Endothelial cell of umbilical vein (primary cell): ENCODE measurements at regions of chr11 and their contacts with region 1.

Region 1: DNA sequence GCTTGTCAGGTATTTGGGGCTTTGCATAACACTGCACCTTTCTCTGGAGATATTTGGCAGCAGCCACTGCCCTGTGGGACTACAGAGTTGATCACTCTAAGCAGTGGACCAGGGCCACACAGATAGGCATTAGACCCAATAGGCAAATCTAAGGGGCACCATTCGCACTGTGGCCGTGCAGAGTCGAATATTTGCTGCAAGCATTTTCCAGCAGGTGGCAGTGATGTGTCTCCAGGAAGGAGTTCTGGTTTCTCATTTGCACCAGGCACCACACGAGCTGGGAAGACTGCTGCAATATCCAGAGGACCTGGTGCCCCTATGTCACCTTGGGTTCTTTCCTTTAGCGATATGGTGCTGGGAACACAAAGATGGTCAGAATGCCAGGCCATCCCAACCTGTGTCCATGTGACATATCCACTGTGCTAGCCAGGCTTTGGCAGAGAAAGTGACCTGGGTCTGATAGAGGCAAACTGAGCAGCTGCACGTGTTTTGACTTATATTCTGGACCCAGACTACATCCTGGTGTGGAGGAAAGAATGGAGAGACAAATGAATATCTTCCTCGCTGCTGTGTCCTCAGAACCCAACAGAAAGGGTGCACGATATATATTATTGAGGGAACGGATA is 318.7 kb downstream of the BUD13 start:
- DNase-seq: peak; percentile 65
- H3K4me3 ChIP-seq: no peak overlapping the region
- H3K27ac ChIP-seq: no peak overlapping the region
- H3K4me1 ChIP-seq: no peaks in the 10 kb centered on the region
- H3K27me3 ChIP-seq: no peaks in the 10 kb centered on the region
- CTCF ChIP-seq: peak; percentile 53 to 80
- POLR2A ChIP-seq: no peak

Region 2: GRCh38 chr11:116122697-116123472 is 331.2 kb before region 1 on chr11:
- CTCF ChIA-PET with region 1: no interaction called
- POLR2A ChIA-PET with region 1: no interaction called
- dilution Hi-C with region 1: no loop called
- intact Hi-C with region 1: no loop called
- DNase-seq: no peak
- H3K4me3 ChIP-seq: no peak overlapping the region
- H3K27ac ChIP-seq: no peak overlapping the region
- H3K4me1 ChIP-seq: no peaks in the 10 kb centered on the region
- H3K27me3 ChIP-seq: no peaks in the 10 kb centered on the region
- CTCF ChIP-seq: no peak
- POLR2A ChIP-seq: no peak

Region 3: GRCh38 chr11:116427903-116428637 is 26.1 kb before region 1 on chr11:
- CTCF ChIA-PET with region 1: no interaction called
- POLR2A ChIA-PET with region 1: no interaction called
- dilution Hi-C with region 1: no loop called
- intact Hi-C with region 1: no loop called
- DNase-seq: peak; percentile 7
- H3K4me3 ChIP-seq: no peak overlapping the region
- H3K27ac ChIP-seq: no peak overlapping the region
- H3K4me1 ChIP-seq: no peaks in the 10 kb centered on the region
- H3K27me3 ChIP-seq: no peaks in the 10 kb centered on the region
- CTCF ChIP-seq: no peak
- POLR2A ChIP-seq: no peak

Region 4: DNA sequence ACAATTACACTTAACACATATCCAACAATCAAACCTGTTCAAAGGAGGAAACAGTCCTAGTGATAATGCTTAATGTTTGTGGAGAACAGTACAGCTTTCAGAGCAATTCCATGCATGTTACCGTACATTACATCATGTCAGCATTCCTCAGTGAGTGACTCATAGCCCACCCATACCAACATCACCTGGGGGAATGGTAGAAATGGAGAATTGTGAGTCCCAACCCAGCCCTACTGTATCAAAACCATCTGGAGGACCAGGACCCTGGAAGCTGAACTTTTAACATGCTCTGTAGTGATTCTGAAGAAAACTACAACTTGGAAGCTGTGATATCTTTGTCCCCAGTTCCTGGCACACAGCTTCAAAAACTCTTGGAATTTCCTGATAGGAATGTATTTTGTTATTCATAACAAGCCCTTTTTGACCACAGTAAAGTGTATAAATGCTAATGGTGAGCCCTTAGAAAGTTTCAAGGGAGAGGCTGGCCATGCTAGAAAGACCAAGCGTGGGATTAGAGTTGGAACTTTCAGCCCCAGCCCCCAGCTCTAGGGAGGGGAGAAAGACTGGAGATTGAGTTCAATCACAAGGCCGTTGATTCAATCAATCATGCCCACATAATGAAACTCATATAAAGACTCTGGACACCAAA is 17.6 kb after region 1 on chr11:
- CTCF ChIA-PET with region 1: interaction called, 18 read pairs
- POLR2A ChIA-PET with region 1: no interaction called
- dilution Hi-C with region 1: no loop called
- intact Hi-C with region 1: no loop called
- DNase-seq: peak; percentile 96
- H3K4me3 ChIP-seq: no peak overlapping the region
- H3K27ac ChIP-seq: peak overlapping the region; percentile 75
- H3K4me1 ChIP-seq: peaks cover 25% of the 10 kb centered on the region
- H3K27me3 ChIP-seq: peaks cover under 1 to 2% of the 10 kb centered on the region in 2 experiments
- CTCF ChIP-seq: no peak
- POLR2A ChIP-seq: no peak

Region 5: DNA sequence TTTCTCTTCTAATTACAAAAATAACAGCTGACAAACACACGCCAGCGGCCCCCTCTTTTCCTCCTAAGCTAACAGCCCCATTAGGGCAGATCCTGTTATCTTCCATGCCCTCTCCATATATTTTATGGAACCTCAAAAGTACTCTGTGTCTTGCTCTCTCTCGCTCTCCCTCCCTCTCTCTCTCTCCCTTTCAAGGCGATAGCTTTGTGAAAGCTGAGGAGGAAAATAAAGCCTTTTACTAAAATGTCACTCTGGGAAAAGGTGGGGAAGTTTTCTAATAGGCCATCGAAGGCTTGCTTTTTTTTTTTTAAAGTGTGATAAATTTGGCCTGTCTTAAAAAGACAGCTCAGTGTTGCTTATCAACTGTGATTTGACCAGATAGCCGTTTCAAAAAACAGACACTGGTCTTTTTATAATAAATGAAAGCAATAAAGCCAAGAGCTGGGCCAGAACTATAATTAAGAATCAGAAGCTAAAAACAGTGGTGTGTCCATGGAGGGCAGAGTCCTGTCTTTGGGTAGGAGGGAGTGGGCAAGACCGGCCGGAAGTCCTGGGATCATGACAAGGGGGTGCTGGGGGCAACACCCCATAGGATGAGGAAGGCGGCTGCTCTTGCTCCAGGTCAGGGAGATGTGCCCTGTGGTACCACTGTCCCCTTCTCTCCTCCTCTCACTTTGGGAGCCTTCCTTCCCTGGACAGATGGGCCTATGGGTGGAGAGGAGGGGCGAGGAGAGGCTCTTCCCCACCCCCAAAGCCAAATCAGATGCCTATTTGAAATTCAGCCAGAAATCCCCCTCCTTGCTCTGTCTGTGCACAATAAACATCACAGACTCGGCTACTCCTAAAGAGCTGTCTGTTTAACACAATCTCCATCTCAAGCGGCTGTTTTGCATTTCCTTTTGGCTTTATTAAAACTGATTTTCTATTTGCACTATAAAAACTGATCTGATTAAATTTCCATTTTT is 51.4 kb after region 1 on chr11:
- CTCF ChIA-PET with region 1: interaction called, 169 read pairs
- POLR2A ChIA-PET with region 1: no interaction called
- dilution Hi-C with region 1: no loop called
- intact Hi-C with region 1: no loop called
- DNase-seq: no peak
- H3K4me3 ChIP-seq: no peak overlapping the region
- H3K27ac ChIP-seq: no peak overlapping the region
- H3K4me1 ChIP-seq: no peaks in the 10 kb centered on the region
- H3K27me3 ChIP-seq: peaks cover 8 to 18% of the 10 kb centered on the region in 2 experiments
- CTCF ChIP-seq: no peak
- POLR2A ChIP-seq: no peak

Region 6: DNA sequence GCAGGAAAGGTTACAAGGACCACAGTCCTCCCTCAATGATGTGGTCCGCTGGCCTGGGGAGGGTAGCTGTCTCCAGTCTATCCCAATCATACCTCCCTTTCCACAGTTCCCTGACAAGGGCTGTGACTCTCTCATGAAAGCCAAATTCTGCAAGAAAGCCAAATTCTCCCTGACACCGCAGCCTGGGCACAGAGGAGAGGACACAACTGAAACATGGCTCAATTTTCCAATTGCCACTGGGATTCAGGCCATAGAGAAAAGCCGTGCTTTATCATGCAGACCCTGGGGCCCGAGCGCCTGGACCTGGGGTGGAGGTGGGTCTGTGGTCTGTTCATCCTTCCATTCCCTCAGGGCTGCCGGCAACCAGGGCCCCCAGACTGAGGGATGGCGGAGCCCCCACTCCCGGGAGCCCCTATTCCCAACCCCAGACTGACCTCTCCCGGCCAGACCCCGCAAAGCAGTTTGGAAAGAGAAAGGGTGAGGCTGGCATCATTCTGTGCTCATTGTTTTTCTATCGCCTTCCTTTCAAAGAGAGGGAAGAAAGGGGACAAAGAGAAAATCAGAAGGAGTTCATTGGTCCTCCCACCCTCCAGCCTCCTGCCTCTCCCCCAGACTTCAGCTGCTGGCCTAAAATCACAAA is 79.2 kb after region 1 on chr11:
- CTCF ChIA-PET with region 1: no interaction called
- POLR2A ChIA-PET with region 1: no interaction called
- dilution Hi-C with region 1: no loop called
- intact Hi-C with region 1: no loop called
- DNase-seq: no peak
- H3K4me3 ChIP-seq: no peak overlapping the region
- H3K27ac ChIP-seq: no peak overlapping the region
- H3K4me1 ChIP-seq: no peaks in the 10 kb centered on the region
- H3K27me3 ChIP-seq: peaks cover 22 to 36% of the 10 kb centered on the region in 2 experiments
- CTCF ChIP-seq: peak in 1 of 2 donors; percentile 14
- POLR2A ChIP-seq: no peak

Region 7: GRCh38 chr11:116641561-116642045 is 187.5 kb after region 1 on chr11:
- CTCF ChIA-PET with region 1: interaction called, 13 read pairs
- POLR2A ChIA-PET with region 1: no interaction called
- dilution Hi-C with region 1: no loop called
- intact Hi-C with region 1: loop called (anchors 1 kb)
- DNase-seq: peak; percentile 29
- H3K4me3 ChIP-seq: no peak overlapping the region
- H3K27ac ChIP-seq: no peak overlapping the region
- H3K4me1 ChIP-seq: no peaks in the 10 kb centered on the region
- H3K27me3 ChIP-seq: no peaks in the 10 kb centered on the region
- CTCF ChIP-seq: peak; percentile 73 to 86
- POLR2A ChIP-seq: no peak

Region 8: GRCh38 chr11:116725434-116726221 is 271.5 kb after region 1 on chr11:
- CTCF ChIA-PET with region 1: no interaction called
- POLR2A ChIA-PET with region 1: no interaction called
- dilution Hi-C with region 1: no loop called
- intact Hi-C with region 1: no loop called
- DNase-seq: no peak
- H3K4me3 ChIP-seq: no peak overlapping the region
- H3K27ac ChIP-seq: no peak overlapping the region
- H3K4me1 ChIP-seq: no peaks in the 10 kb centered on the region
- H3K27me3 ChIP-seq: peaks cover 5 to 6% of the 10 kb centered on the region in 2 experiments
- CTCF ChIP-seq: no peak
- POLR2A ChIP-seq: no peak